MCF 10A (cell line): ENCODE measurements at regions of chr10 and their contacts with region 1.

Region 1: GRCh38 chr10:1737222-1738061 is at the start of gene ADARB2:
- DNase-seq: peak; percentile 92
- H3K4me3 Mint-ChIP-seq: peak within 1 kb of the TSS; percentile 88
- H3K27ac Mint-ChIP-seq: no peak within 1 kb of the TSS
- H3K4me1 Mint-ChIP-seq: peaks cover 15% of the 10 kb centered on the region
- H3K27me3 Mint-ChIP-seq: peaks cover 28% of the 10 kb centered on the region
- CTCF ChIP-seq: no peak
- total RNA-seq, gene ADARB2: 0.52 and 0.96 TPM in 2 replicates

Region 2: DNA sequence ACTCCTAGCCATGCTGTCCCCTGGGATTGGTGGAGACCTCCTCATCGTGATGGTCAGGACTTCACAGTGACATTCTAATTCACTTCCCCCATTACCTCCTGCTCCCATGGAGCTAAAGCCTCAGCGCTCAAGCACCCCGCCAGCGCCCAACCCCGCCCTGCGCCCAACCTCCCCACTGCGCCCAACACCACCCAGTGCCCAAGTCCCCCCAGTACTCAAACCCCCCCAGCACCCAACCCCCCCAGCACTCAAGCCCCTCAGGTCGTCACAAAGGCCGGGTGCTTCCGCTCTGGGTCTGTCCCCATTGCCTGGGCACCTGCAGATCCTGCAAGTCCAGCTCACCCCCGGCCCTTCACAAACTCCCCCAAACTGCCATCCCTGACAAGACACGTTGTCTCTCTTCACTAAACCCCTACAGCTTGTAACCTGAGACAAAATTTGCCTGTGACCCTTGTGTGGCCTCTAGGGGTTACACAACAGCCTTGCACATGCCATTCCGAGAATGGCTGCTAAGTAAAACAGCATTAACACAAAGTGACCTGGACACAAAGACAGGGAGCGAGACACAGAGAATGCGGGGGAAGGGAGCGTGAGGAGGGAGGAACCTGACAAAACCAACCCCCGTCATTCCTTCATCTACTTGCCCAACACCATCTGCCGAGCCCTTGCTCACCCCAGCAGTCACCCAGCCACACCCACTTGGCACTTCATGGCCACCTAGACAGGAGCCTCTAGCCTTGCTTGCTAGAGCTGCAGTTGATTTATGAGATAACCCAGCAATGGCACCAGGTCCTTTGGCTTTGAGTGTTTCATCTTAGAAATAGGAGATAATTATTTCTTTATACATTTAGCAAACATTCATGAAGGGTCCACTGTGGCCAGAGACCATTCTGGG is 107.9 kb before region 1 on chr10:
- CTCF ChIA-PET with region 1: no interaction called
- POLR2A ChIA-PET with region 1: no interaction called
- intact Hi-C with region 1: no loop called
- DNase-seq: peak; percentile 55
- H3K4me3 Mint-ChIP-seq: no peak overlapping the region
- H3K27ac Mint-ChIP-seq: no peak overlapping the region
- H3K4me1 Mint-ChIP-seq: no peaks in the 10 kb centered on the region
- H3K27me3 Mint-ChIP-seq: no peaks in the 10 kb centered on the region
- CTCF ChIP-seq: no peak

Region 3: DNA sequence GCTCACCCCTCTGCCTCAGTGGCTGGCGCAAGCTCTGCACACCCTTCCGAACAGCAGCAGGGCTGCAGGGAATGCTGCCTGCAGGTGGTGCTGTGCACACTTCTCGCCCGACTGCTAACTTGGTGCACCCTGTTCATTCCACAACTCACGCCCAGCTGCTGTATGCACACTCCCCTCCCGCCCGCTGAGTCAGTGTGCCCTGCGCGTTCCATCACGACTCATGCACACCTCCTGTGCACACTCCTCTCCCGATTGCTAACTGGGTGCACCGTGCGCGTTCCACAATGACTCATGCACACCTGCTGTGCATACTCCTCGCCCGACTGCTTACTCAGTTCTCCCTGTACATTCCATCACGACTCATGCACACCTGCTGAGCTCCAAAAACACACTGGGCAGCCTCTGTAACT is 21.6 kb before region 1 on chr10:
- CTCF ChIA-PET with region 1: interaction called, 6 read pairs
- POLR2A ChIA-PET with region 1: interaction called, 14 read pairs
- intact Hi-C with region 1: no loop called
- DNase-seq: peak; percentile 80
- H3K4me3 Mint-ChIP-seq: no peak overlapping the region
- H3K27ac Mint-ChIP-seq: no peak overlapping the region
- H3K4me1 Mint-ChIP-seq: peaks cover 13% of the 10 kb centered on the region
- H3K27me3 Mint-ChIP-seq: no peaks in the 10 kb centered on the region
- CTCF ChIP-seq: peak; percentile 54

Region 4: GRCh38 chr10:1724921-1725488 is 12.4 kb before region 1 on chr10:
- CTCF ChIA-PET with region 1: no interaction called
- POLR2A ChIA-PET with region 1: interaction called, 11 read pairs
- intact Hi-C with region 1: no loop called
- DNase-seq: peak; percentile 65
- H3K4me3 Mint-ChIP-seq: no peak overlapping the region
- H3K27ac Mint-ChIP-seq: no peak overlapping the region
- H3K4me1 Mint-ChIP-seq: peaks cover 10% of the 10 kb centered on the region
- H3K27me3 Mint-ChIP-seq: no peaks in the 10 kb centered on the region
- CTCF ChIP-seq: no peak

Region 5: GRCh38 chr10:1978593-1978992 is 241.2 kb after region 1 on chr10:
- CTCF ChIA-PET with region 1: interaction called, 3 read pairs
- POLR2A ChIA-PET with region 1: no interaction called
- intact Hi-C with region 1: loop called (anchors 10 kb)
- DNase-seq: peak; percentile 91
- H3K4me3 Mint-ChIP-seq: no peak overlapping the region
- H3K27ac Mint-ChIP-seq: peak overlapping the region; percentile 80
- H3K4me1 Mint-ChIP-seq: peaks cover 13% of the 10 kb centered on the region
- H3K27me3 Mint-ChIP-seq: no peaks in the 10 kb centered on the region
- CTCF ChIP-seq: no peak

Region 6: DNA sequence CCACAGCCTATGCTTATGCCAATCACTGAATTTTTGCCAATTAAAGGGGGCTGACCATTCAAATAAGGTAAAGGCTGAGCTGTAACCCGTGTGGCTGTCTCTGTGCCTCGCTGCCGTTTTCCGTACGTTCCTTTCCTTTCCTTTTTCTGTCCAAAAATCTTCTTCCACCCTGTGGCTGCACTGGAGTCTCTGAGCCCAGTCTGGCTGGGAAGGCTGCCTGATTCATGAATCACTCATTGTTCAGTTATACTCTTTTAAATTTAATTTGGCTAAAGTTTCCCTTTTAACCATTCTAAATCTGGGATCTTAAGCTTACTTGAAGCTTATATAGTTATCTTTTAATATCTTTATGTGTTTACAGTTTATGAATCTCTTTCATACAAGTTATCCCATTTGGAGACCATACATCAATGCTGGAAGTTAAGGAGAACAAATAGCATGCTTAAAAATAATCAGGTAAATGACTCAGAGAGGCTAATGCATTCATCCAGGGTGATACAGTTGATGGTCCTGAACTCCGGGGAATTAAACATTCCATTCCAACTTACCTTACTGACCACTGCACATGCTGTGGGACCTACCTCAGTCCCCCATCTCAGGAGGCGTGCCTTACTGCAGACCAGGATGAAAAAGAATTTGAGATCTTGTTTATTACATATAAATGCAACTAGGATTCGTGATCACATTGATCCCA is 385.1 kb after region 1 on chr10:
- CTCF ChIA-PET with region 1: interaction called, 3 read pairs
- POLR2A ChIA-PET with region 1: interaction called, 13 read pairs
- intact Hi-C with region 1: loop called (anchors 5 kb)
- DNase-seq: peak; percentile 57
- H3K4me3 Mint-ChIP-seq: no peak overlapping the region
- H3K27ac Mint-ChIP-seq: peak overlapping the region; percentile 80
- H3K4me1 Mint-ChIP-seq: peaks cover 41% of the 10 kb centered on the region
- H3K27me3 Mint-ChIP-seq: no peaks in the 10 kb centered on the region
- CTCF ChIP-seq: no peak

Region 7: DNA sequence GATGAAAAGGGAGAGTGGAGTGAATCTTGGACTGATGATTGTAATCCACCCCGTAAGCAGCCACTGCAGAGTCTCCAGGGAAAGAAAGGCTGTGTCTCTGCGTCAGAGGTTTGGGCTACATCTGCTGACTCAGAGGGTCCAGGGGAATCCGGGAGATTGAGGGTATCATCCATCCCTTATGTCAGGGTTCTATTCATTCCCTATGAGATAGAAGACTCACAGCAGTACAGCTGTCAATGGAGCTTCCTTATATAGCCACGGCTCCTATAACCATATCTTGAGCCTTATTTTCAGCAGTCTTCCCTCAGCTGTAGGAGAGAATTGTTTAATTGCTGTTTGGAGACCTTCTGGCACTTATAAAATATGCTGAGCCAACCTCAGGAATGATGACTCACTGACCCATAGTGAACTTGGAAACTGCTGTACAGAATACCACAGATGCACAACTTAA is 771.7 kb after region 1 on chr10:
- CTCF ChIA-PET with region 1: no interaction called
- POLR2A ChIA-PET with region 1: no interaction called
- intact Hi-C with region 1: loop called (anchors 10 kb)
- DNase-seq: peak; percentile 49
- H3K4me3 Mint-ChIP-seq: no peak overlapping the region
- H3K27ac Mint-ChIP-seq: no peak overlapping the region
- H3K4me1 Mint-ChIP-seq: peaks cover 10% of the 10 kb centered on the region
- H3K27me3 Mint-ChIP-seq: no peaks in the 10 kb centered on the region
- CTCF ChIP-seq: no peak